ENCODE measurements at regions of chrX and their contacts with region 1.

Region 1: GRCh38 chrX:107716816-107717700 is 58.5 kb downstream of the TSC22D3 start:
- DNase-seq: peak; percentile 93 to 94
- ATAC-seq: peak; percentile 83
- H3K4me3 ChIP-seq: peak overlapping the region; percentile 50 to 92
- H3K27ac ChIP-seq: peak overlapping the region; percentile 93 to 100
- H3K4me1 ChIP-seq: no peaks in the 10 kb centered on the region
- H3K27me3 ChIP-seq: no peaks in the 10 kb centered on the region

Region 2: GRCh38 chrX:107654872-107655761 is 61.9 kb before region 1 on chrX:
- intact Hi-C with region 1: loop called in 1 of 2 experiments (anchors 5 kb)
- DNase-seq: peak; percentile 77 to 87
- ATAC-seq: peak; percentile 77
- H3K4me3 ChIP-seq: no peak overlapping the region
- H3K27ac ChIP-seq: no peak overlapping the region
- H3K4me1 ChIP-seq: no peaks in the 10 kb centered on the region
- H3K27me3 ChIP-seq: no peaks in the 10 kb centered on the region

Region 3: DNA sequence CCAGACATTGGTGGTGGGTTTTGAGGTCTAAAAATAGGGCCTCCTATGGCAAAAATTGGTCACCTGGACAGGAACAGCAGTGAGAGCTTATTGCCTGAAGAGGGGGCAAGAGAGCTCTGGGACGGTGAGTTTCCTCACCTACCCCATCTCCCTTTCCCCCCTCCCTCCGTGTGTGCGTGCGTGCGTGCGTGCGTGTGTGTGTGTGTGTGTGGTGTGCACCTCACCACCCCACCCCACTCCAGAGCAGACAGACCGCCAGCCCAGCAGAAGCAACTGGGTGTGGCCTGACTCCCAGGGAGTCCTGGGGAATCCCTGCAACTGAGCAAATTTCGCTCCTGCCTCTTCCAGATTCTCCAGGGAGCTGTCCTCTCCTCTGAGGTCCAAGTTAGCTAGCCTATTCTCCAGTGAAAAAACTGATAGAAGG is 44.1 kb before region 1 on chrX:
- intact Hi-C with region 1: loop called (anchors 2 kb)
- DNase-seq: peak; percentile 78 to 86
- ATAC-seq: peak; percentile 51
- H3K4me3 ChIP-seq: no peak overlapping the region
- H3K27ac ChIP-seq: peak overlapping the region in 1 of 2 donors; percentile 92
- H3K4me1 ChIP-seq: peaks cover 0 to 2% of the 10 kb centered on the region in 2 donors
- H3K27me3 ChIP-seq: no peaks in the 10 kb centered on the region

Region 4: DNA sequence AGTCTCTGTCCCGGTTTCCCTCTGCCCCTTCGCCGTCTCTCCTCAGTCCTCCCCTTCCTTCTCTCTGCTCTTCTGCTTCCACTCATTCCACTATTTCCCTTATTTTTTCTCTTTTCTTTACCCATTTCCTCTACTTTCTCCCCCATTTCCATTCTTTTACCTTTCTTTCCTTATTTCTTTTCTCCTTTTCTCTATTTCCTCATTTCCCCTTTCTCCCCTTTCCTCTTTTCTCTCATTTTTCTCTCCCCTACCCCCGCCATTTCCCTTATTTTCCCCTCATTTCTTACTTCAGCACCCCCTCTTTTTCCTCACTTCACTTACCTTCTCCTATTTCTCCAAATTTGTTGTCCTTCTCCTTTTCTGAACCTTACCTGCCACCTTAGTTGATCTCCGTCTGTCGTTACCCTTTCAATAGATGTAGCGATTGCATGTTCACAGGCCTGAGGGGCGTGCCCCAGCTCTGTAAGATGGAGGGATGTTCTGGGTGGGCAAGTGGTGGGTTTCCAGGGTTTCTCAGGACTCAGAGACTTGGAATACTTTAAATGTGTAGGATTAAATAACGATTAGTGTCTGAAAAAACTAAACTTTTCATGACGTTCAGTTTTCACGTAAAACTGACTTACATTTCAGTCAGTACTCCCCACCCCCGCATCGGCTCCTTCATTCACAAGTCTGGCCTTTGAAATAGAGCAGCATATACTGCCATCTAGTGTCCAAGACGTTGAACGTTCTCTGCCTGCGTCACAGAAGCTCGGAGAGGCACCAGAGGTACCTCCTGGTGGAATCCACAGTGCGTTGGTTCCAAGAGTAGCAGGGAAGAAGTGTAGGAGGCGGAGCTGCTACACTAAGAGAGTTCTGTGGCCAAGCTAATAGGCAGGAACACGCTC is 59.8 kb after region 1 on chrX:
- intact Hi-C with region 1: loop called (anchors 2 kb)
- DNase-seq: peak; percentile 83 to 86
- ATAC-seq: peak; percentile 90
- H3K4me3 ChIP-seq: peak overlapping the region; percentile 32 to 59
- H3K27ac ChIP-seq: no peak overlapping the region
- H3K4me1 ChIP-seq: peaks cover 0 to 2% of the 10 kb centered on the region in 2 donors
- H3K27me3 ChIP-seq: no peaks in the 10 kb centered on the region

Measured in aorta (tissue), 5 donors.